Panc1 (cell line): ENCODE measurements at regions of chr9 and their contacts with region 1.

Region 1: DNA sequence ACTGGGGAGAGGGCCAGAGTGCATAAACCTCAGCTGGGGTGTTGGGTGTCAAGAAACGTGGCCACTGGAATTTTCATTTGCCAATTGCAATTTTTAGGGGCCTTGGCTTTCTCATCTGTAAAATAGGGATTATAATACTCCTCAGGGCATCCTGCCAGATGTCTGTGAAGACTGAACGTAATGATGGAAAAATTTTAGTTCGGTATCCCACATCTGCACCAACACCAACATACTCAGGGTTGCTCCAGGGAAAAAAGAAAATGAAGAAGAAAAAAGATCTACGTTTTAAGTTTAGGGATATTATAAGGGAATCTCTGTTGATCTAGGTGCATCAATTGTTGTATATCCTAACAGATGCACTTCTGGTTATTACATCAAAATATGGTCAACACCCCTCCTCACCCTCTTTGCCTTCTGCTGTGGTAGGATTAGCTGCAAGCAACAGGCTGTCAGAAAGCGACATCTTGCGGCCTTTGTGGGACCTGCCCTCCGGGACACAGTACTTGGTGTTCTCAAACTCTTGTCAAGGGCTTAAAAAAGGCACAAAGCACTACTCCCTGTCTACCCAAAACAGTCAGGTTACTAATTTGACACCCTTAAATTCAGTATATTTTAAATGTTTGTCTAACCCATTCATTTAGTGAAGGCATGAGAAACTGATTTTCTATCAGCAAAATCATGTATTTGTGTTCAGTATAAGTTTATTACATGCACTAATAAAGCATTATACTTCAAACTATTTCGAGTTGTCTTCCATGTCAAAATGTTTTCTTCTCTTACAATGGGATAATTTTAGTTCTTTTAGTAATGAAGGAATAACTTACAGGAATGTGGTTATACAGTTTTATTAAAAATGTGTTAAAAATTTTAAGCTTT is 8.3 kb upstream of the TBC1D2 start:
- DNase-seq: peak; percentile 67
- ATAC-seq: peak; percentile 99
- H3K4me3 ChIP-seq: no peak overlapping the region
- H3K27ac ChIP-seq: no peak overlapping the region
- H3K4me1 ChIP-seq: no peaks in the 10 kb centered on the region
- H3K27me3 ChIP-seq: no peaks in the 10 kb centered on the region
- CTCF ChIP-seq: peak; percentile 88

Region 2: DNA sequence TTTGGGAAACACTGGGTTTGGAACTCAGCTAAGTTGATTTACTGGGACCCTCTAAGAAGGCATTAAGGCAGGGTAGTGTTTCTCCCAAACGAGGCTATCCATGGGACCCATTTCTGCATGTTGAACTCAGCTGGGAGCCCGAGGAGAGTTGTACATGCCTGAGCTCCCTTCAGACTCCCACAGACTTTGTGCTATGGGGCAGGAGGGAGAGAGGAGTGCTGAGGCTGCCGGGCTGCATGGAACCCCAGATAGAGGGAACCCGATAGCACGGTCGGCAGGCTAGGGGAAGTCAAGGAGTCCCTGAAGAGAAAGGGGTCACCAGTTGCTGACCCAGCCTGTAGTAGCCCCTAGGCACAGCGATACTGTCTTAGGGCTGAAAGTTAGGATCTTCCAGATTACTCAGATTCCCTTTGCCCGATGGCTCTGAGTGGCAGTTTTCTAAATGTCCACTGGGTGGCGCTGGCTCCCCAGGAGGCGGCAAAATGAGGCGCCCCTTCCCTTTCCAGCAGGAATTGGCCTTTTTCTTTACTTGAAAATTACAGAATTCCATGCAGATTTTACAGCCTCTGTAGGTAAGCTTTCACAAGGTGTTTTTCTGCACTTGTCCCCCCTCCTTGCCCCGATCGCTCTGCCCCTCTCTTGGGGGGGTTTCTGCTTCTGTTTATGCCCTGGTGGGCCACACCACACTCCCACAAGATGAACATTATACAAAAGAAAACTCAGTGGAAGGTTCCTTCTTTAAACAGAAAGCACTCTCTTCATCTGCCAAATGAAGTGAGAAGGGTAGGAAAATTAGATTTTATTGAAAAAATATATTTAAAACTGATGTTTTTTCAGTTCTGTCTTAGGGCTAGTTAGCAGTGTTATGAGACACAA is 189.4 kb before region 1 on chr9:
- CTCF ChIA-PET with region 1: no interaction called
- POLR2A ChIA-PET with region 1: no interaction called
- in situ Hi-C with region 1: no loop called
- intact Hi-C with region 1: loop called (anchors 2 kb)
- DNase-seq: peak; percentile 22
- ATAC-seq: peak; percentile 74
- H3K4me3 ChIP-seq: no peak overlapping the region
- H3K27ac ChIP-seq: no peak overlapping the region
- H3K4me1 ChIP-seq: no peaks in the 10 kb centered on the region
- H3K27me3 ChIP-seq: no peaks in the 10 kb centered on the region
- CTCF ChIP-seq: peak; percentile 93

Region 3: DNA sequence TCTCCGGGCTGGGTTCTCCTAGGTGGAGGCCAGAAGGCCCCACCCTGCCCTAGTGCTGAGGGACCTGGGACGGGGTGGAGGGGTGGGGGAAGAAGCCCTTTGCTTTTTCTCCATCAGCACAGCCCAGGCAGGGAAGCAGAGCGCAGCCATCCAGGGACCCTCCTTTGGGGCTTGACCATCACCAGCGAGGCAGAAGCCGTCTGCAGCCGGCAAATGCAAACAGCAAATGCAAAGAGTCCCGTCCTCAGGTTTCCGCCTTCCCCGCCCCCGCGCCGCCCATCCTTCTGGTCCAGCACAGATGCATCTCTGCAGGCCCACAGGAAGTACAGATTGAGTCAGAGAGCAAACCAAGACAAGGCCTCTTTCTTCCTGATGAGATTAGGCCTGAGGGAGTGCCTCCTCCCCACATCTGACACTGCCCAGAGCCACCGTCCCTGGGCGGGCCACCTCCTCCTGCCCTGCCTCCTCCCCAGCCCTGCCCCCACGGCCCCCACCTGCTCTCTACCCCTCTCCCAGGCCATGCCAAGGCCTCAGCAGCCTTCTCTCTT is 94.7 kb before region 1 on chr9:
- CTCF ChIA-PET with region 1: no interaction called
- POLR2A ChIA-PET with region 1: interaction called, 10 read pairs
- in situ Hi-C with region 1: no loop called
- intact Hi-C with region 1: no loop called
- DNase-seq: no peak
- ATAC-seq: peak; percentile 67
- H3K4me3 ChIP-seq: no peak overlapping the region
- H3K27ac ChIP-seq: no peak overlapping the region
- H3K4me1 ChIP-seq: peaks cover 22% of the 10 kb centered on the region
- H3K27me3 ChIP-seq: no peaks in the 10 kb centered on the region
- CTCF ChIP-seq: no peak

Region 4: DNA sequence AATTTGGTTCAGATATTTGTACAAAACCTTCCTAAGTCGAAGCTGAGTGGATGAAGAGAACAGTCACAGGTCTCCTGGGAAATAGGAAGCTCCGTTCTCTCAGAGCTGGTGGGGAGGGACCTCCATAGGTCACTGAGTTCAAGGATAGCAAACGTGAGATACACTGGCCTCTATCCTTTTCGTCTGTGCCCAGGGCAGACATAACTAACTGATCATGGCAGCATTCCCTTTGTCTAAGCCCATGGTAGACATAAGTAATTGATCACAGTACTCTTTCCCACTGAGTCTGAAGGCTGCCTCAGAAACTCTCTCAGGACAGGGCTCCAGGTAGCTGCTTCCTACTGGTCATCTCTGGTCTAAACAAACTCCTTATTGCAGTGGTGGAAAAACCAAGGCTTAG is 59.0 kb before region 1 on chr9:
- CTCF ChIA-PET with region 1: no interaction called
- POLR2A ChIA-PET with region 1: no interaction called
- in situ Hi-C with region 1: no loop called
- intact Hi-C with region 1: loop called (anchors 1 kb)
- DNase-seq: no peak
- ATAC-seq: no peak
- H3K4me3 ChIP-seq: no peak overlapping the region
- H3K27ac ChIP-seq: no peak overlapping the region
- H3K4me1 ChIP-seq: no peaks in the 10 kb centered on the region
- H3K27me3 ChIP-seq: no peaks in the 10 kb centered on the region
- CTCF ChIP-seq: no peak

Region 5: GRCh38 chr9:98241357-98242300 is 22.1 kb before region 1 on chr9:
- CTCF ChIA-PET with region 1: no interaction called
- POLR2A ChIA-PET with region 1: no interaction called
- in situ Hi-C with region 1: no loop called
- intact Hi-C with region 1: no loop called
- DNase-seq: no peak
- ATAC-seq: no peak
- H3K4me3 ChIP-seq: no peak overlapping the region
- H3K27ac ChIP-seq: no peak overlapping the region
- H3K4me1 ChIP-seq: no peaks in the 10 kb centered on the region
- H3K27me3 ChIP-seq: no peaks in the 10 kb centered on the region
- CTCF ChIP-seq: no peak

Region 6: DNA sequence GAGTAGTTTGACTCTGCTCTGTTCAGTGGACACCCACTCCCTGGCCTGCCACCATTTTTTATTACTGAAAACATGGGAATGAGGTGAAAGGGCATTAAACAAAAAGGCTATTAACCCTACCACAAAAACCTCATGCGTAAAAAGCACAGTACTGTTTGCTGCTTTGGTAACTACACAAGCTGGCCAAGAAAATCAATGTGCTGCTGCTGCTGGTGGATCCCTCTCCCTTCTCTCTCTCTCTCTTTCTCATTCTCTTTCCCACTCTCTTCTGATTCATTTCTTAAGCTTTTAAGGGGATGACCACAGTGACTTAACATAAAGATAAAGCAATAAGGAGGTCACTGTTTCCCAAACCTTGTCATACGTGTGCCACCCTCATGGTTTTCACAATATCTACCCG is 174.9 kb after region 1 on chr9:
- CTCF ChIA-PET with region 1: no interaction called
- POLR2A ChIA-PET with region 1: no interaction called
- in situ Hi-C with region 1: no loop called
- intact Hi-C with region 1: no loop called
- DNase-seq: no peak
- ATAC-seq: no peak
- H3K4me3 ChIP-seq: no peak overlapping the region
- H3K27ac ChIP-seq: no peak overlapping the region
- H3K4me1 ChIP-seq: no peaks in the 10 kb centered on the region
- H3K27me3 ChIP-seq: no peaks in the 10 kb centered on the region
- CTCF ChIP-seq: no peak

Region 7: GRCh38 chr9:98755006-98755575 is 491.4 kb after region 1 on chr9:
- CTCF ChIA-PET with region 1: no interaction called
- POLR2A ChIA-PET with region 1: no interaction called
- in situ Hi-C with region 1: no loop called
- intact Hi-C with region 1: no loop called
- DNase-seq: no peak
- ATAC-seq: no peak
- H3K4me3 ChIP-seq: no peak overlapping the region
- H3K27ac ChIP-seq: no peak overlapping the region
- H3K4me1 ChIP-seq: no peaks in the 10 kb centered on the region
- H3K27me3 ChIP-seq: no peaks in the 10 kb centered on the region
- CTCF ChIP-seq: 0 out of 2 replicates have a peak, but pooled peaks have one; percentile 17